ENCODE measurements at regions of chr16 and their contacts with region 1.

Region 1: DNA sequence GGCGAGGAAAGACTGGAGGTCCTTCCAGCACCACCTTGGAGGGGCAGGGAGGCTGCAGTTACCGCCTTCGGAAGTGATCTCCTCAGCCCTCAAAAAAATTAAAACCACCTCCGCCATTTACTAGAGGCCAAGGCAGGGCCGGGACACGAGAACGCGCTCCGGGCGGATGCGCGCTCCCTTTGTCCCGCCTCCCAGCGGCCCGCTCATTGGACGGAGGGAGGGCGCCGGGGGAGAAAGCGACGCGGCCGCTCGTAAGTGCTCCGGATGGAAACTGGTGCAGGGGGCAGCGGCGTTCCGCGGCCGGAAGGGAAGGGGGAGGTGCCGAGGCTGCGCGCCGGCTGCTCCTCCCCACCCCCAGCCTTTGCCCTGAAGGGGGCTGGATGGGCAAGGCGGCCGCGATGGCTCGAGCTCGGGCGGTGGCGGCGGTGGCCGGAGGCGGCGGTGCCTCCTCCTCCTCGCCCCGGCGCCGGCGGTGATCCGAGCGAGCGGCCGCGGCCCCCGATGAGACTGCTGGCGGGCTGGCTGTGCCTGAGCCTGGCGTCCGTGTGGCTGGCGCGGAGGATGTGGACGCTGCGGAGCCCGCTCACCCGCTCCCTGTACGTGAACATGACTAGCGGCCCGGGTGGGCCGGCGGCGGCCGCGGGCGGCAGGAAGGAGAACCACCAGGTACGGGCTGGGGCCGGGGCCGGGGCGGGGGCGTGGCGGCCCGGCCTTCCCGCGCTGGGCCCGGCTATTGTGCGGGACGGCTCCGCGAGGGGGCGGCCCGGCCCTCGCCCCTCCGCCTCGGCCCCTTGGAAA is at the start of gene METTL9:
- DNase-seq: peak; percentile 95
- H3K4me3 Mint-ChIP-seq: peak within 1 kb of the TSS; percentile 86
- H3K27ac Mint-ChIP-seq: peak within 1 kb of the TSS; percentile 87
- H3K4me1 Mint-ChIP-seq: peaks cover 57% of the 10 kb centered on the region
- H3K27me3 Mint-ChIP-seq: no peaks in the 10 kb centered on the region
- total RNA-seq, gene METTL9: 82.5 to 85.1 TPM

Region 2: DNA sequence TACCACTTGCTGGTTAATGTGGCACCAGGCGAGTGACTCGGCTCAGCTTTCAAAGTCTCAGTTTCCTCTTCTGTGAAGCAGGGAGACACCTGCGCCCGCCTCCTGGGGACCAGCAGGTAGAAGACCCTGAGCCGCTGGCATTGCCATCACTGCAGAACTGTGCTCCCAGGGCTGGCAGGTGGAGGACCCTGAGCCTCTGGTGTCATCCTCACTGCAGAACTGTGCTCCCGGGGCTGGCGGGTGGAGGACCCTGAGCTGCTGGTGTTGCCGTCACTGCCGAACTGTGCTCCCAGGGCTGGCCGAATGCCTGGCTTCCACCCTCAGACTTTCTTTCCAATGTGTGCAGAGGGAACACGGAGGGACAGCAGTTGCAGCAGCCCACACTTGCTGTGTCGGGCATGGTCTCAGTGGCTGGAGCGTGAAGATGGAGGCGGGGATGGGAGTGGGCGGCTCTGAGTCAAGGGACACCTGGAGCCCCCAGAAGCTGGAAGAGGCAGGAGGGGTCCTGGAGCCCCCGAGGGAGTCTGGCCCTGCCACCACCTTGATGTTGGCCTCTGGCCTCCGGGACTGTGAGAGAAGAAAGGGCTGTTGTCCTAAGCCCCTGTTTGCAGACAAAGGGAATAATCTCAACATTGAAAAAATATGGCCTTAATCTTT is 75.9 kb before region 1 on chr16:
- CTCF ChIA-PET with region 1: no interaction called
- intact Hi-C with region 1: loop called (anchors 1 kb)
- DNase-seq: no peak
- H3K4me3 Mint-ChIP-seq: no peak overlapping the region
- H3K27ac Mint-ChIP-seq: no peak overlapping the region
- H3K4me1 Mint-ChIP-seq: no peaks in the 10 kb centered on the region
- H3K27me3 Mint-ChIP-seq: no peaks in the 10 kb centered on the region

Region 3: DNA sequence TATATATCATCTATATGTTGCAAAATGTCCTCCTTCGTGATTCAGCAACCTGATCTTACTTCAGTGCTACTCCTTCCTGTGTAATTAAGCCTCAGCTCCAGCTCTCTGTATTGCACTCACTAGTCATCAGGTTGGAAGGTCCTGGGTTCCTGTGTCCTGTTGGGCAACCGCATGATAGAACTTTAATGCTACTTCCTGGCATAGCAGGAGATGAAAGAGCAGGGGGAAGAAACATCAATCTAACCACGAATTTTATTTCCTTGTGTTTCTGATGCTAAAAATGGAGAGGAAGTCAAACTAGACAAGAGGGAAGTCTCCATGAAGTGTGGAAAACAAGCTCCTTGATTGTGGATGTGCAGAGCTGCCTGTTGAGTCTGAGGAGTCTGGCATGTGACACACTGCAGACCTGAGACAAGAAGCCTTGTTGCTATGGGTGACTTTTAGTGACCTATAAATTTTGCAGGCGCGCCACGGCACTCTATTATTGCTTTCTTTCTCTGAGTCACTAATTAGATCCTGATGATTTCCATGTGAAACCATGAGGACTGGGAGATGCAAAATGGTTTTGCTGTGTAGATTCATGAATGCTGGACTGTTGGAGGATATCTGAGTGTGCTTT is 27.3 kb after region 1 on chr16:
- CTCF ChIA-PET with region 1: no interaction called
- intact Hi-C with region 1: loop called (anchors 2 kb)
- DNase-seq: peak; percentile 52
- H3K4me3 Mint-ChIP-seq: no peak overlapping the region
- H3K27ac Mint-ChIP-seq: peak overlapping the region; percentile 6
- H3K4me1 Mint-ChIP-seq: peaks cover 45% of the 10 kb centered on the region
- H3K27me3 Mint-ChIP-seq: no peaks in the 10 kb centered on the region

Region 4: GRCh38 chr16:21646721-21647561 is 47.5 kb after region 1 on chr16:
- CTCF ChIA-PET with region 1: interaction called, 4 read pairs
- intact Hi-C with region 1: loop called (anchors 1 kb)
- DNase-seq: peak; percentile 91
- H3K4me3 Mint-ChIP-seq: peak overlapping the region; percentile 25
- H3K27ac Mint-ChIP-seq: peak overlapping the region; percentile 76
- H3K4me1 Mint-ChIP-seq: peaks cover 49% of the 10 kb centered on the region
- H3K27me3 Mint-ChIP-seq: no peaks in the 10 kb centered on the region

Region 5: DNA sequence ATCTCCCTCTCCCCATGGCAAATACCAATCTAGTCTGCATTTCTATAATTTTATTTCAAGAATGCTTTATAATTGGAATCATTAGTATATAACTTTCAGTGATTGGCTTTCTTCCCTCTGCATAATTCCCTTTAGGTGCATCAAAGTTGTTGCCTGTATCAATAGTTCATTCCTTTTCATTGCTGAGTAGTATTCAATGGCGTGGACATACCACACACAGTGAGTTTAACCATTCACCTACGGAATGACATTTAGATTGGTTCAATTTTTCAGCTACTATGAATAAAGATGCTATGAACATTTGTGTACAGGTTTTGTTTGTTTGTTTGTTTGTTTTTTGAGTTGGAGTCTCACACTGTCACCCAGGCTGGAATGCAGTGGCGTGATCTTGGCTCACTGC is 74.0 kb after region 1 on chr16:
- CTCF ChIA-PET with region 1: no interaction called
- intact Hi-C with region 1: no loop called
- DNase-seq: no peak
- H3K4me3 Mint-ChIP-seq: no peak overlapping the region
- H3K27ac Mint-ChIP-seq: no peak overlapping the region
- H3K4me1 Mint-ChIP-seq: no peaks in the 10 kb centered on the region
- H3K27me3 Mint-ChIP-seq: no peaks in the 10 kb centered on the region

Region 6: DNA sequence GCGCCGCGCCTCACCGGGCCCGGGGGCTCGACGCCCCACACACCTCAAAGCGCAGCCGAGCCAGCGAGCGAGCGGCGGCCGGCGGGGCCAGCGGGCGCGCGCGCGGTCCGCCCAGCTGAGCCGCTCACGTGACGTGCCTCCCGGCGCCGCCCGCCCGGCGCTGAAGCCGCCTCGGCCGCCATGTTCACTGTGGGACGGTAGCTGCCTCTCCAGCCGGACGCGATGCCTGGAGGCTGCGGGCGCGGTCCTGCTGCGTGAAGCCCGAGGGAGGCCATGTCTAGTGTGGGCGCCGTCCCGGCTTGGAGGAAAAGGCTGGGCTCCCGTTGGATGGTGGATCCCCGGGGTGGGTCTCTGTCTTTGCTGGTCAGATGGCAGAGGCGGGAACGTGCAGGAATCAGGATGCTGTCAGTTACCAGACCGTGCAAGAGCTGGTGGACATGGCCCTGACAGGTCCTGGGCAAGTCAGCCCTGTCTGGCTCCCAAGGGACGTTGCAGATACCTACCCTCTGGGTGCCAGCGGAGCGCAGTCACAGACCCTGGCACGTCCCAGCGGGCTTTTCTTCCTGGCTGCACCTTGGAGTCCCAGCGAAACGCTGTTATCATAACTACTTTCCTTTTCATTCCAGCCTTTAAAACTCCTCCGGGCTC is 1550.0 kb after region 1 on chr16 and contains the start of gene USP31:
- CTCF ChIA-PET with region 1: no interaction called
- intact Hi-C with region 1: loop called (anchors 1 kb)
- DNase-seq: peak; percentile 93
- H3K4me3 Mint-ChIP-seq: peak within 1 kb of the TSS; percentile 95
- H3K27ac Mint-ChIP-seq: no peak within 1 kb of the TSS
- H3K4me1 Mint-ChIP-seq: peaks cover 21% of the 10 kb centered on the region
- H3K27me3 Mint-ChIP-seq: no peaks in the 10 kb centered on the region
- total RNA-seq, gene USP31: 5.1 to 5.2 TPM